ENCODE measurements at regions of chr11 and their contacts with region 1.

Region 1: DNA sequence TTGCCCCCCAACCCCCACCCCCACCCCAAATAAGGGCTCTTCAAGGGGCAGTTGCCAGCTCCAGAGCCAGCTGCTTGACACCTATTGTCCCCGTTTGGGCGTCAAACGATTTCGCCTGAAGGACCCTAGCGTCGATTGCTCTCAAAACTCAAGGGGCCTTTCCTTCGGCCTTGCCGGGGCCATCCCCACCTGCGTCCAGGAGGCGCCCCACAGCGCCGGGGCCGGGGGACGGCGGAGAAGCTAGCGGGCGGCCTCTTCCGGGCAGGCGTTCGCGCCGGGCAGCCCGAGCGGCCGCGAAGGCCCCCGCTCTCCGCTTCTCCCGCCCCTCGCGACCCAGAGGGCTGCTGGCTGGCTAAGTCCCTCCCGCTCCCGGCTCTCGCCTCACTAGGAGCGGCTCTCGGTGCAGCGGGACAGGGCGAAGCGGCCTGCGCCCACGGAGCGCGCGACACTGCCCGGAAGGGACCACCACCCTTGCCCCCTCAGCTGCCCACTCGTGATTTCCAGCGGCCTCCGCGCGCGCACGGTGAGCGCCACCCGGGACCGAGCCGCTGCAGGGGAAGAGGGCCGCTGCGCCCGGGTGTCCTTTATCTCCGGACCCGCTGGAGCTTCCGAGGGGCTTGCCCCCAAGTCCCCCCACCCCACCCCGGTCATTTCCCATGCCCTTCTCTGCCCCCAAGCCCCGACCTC is at the start of gene CAPRIN1:
- DNase-seq: peak; percentile 91
- ATAC-seq: peak; percentile 78
- H3K4me3 Mint-ChIP-seq: peak within 1 kb of the TSS; percentile 98
- H3K27ac Mint-ChIP-seq: peak within 1 kb of the TSS; percentile 99
- H3K4me1 Mint-ChIP-seq: peaks cover 17% of the 10 kb centered on the region
- H3K27me3 Mint-ChIP-seq: peaks cover 2% of the 10 kb centered on the region
- total RNA-seq, gene CAPRIN1: 295 to 316 TPM

Region 2: DNA sequence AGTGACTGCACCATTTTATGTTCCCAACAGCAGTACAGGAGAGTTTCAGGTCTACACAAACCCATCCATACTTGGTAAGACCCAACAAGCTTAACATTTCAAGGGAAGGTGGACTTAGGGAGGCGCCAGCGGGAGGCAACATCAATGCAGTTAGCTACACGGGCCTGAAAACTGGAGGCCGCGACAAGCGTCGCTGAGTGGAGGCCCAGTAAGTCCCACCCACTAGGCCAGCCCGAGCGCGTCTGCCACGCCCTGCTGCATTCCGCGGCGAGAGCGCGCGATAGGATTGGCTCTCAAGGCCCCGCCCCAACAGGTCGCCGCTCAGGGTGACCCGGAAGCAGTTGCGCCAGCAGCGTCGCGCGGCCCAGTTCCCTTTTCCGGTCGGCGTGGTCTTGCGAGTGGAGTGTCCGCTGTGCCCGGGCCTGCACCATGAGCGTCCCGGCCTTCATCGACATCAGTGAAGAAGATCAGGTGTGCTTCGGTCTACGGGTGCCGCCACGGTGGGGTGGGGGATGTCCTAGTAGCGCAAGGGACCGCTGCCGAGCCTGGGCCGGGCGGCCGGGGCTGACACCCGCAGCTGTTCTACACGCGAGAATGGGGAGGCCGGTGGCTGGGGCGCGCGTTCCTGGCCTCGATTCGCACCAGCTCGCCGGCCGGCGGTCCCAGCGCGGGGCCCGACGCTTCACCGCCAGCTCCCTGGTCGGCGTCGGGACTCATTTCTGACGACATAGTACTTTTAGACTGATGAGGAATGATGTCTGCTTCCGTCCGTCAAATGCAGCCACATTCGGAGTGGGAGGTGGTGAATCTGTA is 1467.8 kb before region 1 on chr11 and contains the start of gene EIF3M:
- CTCF ChIA-PET with region 1: no interaction called
- POLR2A ChIA-PET with region 1: no interaction called
- intact Hi-C with region 1: loop called in 1 of 2 experiments (anchors 5 kb)
- DNase-seq: peak; percentile 98
- ATAC-seq: peak; percentile 99
- H3K4me3 Mint-ChIP-seq: peak within 1 kb of the TSS; percentile 87
- H3K27ac Mint-ChIP-seq: peak within 1 kb of the TSS; percentile 96
- H3K4me1 Mint-ChIP-seq: peaks cover 39% of the 10 kb centered on the region
- H3K27me3 Mint-ChIP-seq: no peaks in the 10 kb centered on the region
- total RNA-seq, gene EIF3M: 392 to 408 TPM

Region 3: DNA sequence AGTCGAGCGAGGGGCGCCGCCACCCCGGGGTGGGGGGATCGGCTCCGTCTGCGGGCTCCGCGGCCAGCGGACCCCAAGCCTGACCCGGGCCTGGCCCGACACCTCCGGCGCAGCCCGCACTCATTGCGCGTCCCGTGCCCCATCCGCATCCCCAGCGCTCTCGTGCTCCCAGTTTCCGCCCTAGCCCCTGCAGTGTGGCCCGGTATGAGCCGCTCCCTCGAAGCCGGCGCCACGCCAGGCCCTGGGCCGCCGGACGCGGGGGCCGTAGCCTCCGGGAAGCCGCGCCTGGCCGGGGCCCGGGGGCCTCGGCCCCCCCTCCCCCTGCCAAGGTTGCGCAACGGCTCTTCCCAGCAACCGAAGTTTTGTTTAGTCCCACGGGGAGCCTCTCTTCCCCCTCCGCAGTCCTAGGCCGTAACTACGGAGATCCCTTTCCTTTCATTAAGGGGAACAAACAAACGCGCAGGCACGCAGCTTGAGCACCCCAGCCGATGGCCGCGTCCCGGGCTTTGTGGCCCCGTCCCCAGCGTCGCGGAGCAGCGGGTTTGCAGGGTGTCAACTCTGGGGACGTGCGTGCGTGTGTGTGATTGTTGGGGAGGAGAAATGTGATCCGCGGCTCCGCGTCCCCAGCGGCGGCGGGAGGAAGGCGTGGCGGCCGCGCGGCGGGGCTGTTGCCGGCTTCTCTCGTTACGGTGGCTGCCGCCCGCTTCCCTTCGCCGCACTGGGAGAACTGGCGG is 793.4 kb before region 1 on chr11:
- CTCF ChIA-PET with region 1: no interaction called
- POLR2A ChIA-PET with region 1: no interaction called
- intact Hi-C with region 1: loop called in 1 of 2 experiments (anchors 1 kb)
- DNase-seq: peak; percentile 86
- ATAC-seq: peak; percentile 62
- H3K4me3 Mint-ChIP-seq: peak overlapping the region; percentile 96
- H3K27ac Mint-ChIP-seq: peak overlapping the region; percentile 92
- H3K4me1 Mint-ChIP-seq: peaks cover 34% of the 10 kb centered on the region
- H3K27me3 Mint-ChIP-seq: no peaks in the 10 kb centered on the region

Region 4: DNA sequence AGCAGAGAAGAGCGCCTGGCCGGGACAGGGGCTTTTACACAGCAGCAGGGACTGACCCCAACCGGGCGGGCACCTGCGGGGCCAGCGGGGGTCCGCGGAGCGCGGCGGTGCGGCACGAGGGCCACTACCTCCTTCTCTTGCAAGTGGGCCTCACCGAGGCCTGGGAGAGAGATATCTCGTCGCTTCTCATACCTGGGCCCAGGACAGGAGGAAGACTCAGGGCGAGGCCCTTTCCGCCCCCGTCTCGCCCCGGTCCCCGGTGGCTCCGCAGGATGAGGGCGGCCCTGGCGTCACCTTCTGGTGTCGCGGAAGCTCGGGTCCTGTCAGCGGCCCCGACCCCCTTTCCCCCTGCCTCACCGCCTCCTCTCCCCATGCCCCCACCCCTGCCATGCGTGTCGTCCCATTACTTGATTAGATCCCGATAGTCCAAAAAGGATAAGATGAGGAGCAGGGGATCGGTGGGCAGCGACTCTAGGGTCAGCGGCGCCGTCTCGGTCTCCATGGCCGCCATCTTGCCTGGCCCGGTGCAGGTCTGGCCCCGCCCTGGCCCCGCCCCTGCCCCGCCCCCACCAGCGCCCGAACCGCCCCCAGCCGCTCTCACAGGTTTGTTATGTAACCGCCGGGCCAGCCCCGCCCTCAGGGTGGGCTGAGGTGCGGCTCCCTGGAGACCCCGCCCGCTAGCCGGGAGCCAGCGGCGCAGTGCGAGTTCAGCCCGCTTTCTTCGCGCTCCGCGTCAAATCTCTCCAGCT is 277.3 kb before region 1 on chr11 and contains the start of gene FBXO3:
- CTCF ChIA-PET with region 1: no interaction called
- POLR2A ChIA-PET with region 1: no interaction called
- intact Hi-C with region 1: loop called in 1 of 2 experiments (anchors 1 kb)
- DNase-seq: peak; percentile 87
- ATAC-seq: peak; percentile 85
- H3K4me3 Mint-ChIP-seq: peak within 1 kb of the TSS; percentile 89
- H3K27ac Mint-ChIP-seq: peak within 1 kb of the TSS; percentile 75
- H3K4me1 Mint-ChIP-seq: peaks cover 44% of the 10 kb centered on the region
- H3K27me3 Mint-ChIP-seq: peaks cover 12% of the 10 kb centered on the region
- total RNA-seq, gene FBXO3: 11.4 to 12.2 TPM

Region 5: DNA sequence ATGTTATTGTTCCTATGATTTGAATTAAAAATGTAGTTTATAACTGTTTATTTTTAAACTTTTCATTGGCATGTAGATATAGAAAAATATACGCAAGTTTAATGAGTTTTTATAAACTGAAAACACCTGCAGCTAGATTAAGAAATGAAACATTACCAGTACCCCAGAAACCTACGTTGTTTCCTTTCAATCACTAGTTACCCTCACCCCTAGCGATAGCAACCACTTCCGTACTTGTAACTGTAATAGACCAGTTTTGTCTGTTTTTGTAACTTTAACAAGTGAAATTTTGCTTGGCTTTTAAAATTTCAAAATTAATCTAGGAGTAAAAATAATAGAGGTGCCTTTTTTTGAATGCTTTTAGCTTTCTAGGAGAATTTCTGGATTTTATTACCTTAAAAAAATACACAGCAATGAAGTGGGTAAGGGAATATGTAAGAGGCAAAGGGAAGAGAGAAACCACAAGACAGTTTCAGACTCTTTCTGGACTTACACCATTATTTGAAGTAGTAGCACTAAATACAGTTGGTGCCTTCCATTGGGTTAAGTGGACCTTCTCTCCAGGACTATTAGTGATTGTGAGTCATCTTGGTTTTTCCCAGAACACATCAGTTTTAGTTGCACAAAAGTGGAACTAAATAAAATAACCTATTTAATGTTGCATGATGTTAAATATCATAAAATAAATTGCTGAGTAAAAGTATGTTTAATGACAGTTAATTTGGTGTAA is 35.2 kb after region 1 on chr11:
- CTCF ChIA-PET with region 1: no interaction called
- POLR2A ChIA-PET with region 1: no interaction called
- intact Hi-C with region 1: loop called in 1 of 2 experiments (anchors 1 kb)
- DNase-seq: no peak
- ATAC-seq: peak; percentile 26
- H3K4me3 Mint-ChIP-seq: no peak overlapping the region
- H3K27ac Mint-ChIP-seq: peak overlapping the region; percentile 55
- H3K4me1 Mint-ChIP-seq: peaks cover 10% of the 10 kb centered on the region
- H3K27me3 Mint-ChIP-seq: no peaks in the 10 kb centered on the region

Region 6: GRCh38 chr11:34243726-34244464 is 192.4 kb after region 1 on chr11:
- CTCF ChIA-PET with region 1: no interaction called
- POLR2A ChIA-PET with region 1: no interaction called
- intact Hi-C with region 1: loop called in 1 of 2 experiments (anchors 5 kb)
- DNase-seq: peak; percentile 79
- ATAC-seq: peak; percentile 65
- H3K4me3 Mint-ChIP-seq: no peak overlapping the region
- H3K27ac Mint-ChIP-seq: no peak overlapping the region
- H3K4me1 Mint-ChIP-seq: peaks cover 88% of the 10 kb centered on the region
- H3K27me3 Mint-ChIP-seq: peaks cover 2% of the 10 kb centered on the region

Region 7: GRCh38 chr11:34438529-34439507 is 387.3 kb after region 1 on chr11 and contains the start of gene CAT:
- CTCF ChIA-PET with region 1: no interaction called
- POLR2A ChIA-PET with region 1: no interaction called
- intact Hi-C with region 1: loop called in 1 of 2 experiments (anchors 1 kb)
- DNase-seq: peak; percentile 99
- ATAC-seq: peak; percentile 99
- H3K4me3 Mint-ChIP-seq: peak within 1 kb of the TSS; percentile 86
- H3K27ac Mint-ChIP-seq: peak within 1 kb of the TSS; percentile 93
- H3K4me1 Mint-ChIP-seq: peaks cover 22% of the 10 kb centered on the region
- H3K27me3 Mint-ChIP-seq: no peaks in the 10 kb centered on the region
- total RNA-seq, gene CAT: 25.1 to 25.5 TPM

Measured in activated CD4-positive, alpha-beta T cell treated with anti-CD3 and anti-CD28 coated beads for 36 hours (primary cell).